ENCODE measurements at regions of chr2 and their contacts with region 1.

Region 1: GRCh38 chr2:62410015-62410453 is 96.0 kb downstream of the TMEM17 start:
- DNase-seq: no peak
- H3K4me3 Mint-ChIP-seq: no peak overlapping the region
- H3K27ac Mint-ChIP-seq: no peak overlapping the region
- H3K4me1 Mint-ChIP-seq: peaks cover 4% of the 10 kb centered on the region
- H3K27me3 Mint-ChIP-seq: peaks cover 2% of the 10 kb centered on the region

Region 2: DNA sequence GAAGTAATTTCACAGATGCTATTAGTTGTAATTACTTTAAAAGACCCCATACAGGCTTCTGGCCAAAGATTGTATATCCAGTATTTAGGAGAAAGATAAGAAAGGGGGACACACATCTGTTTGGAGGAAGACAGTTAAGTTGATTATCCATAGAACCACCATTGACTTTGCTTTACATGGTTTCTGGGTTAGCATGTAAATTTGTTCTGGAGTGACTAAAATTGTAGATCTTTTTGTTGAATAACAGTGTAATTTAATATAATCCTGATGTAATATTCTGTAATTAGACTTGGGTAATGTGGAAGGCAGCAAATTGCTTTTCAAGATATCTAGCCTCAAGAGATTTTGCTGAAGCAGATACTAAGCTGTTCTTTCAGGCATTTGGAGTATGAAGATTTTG is 487.3 kb before region 1 on chr2:
- intact Hi-C with region 1: loop called (anchors 1 kb)
- DNase-seq: no peak
- H3K4me3 Mint-ChIP-seq: no peak overlapping the region
- H3K27ac Mint-ChIP-seq: no peak overlapping the region
- H3K4me1 Mint-ChIP-seq: no peaks in the 10 kb centered on the region
- H3K27me3 Mint-ChIP-seq: no peaks in the 10 kb centered on the region

Region 3: DNA sequence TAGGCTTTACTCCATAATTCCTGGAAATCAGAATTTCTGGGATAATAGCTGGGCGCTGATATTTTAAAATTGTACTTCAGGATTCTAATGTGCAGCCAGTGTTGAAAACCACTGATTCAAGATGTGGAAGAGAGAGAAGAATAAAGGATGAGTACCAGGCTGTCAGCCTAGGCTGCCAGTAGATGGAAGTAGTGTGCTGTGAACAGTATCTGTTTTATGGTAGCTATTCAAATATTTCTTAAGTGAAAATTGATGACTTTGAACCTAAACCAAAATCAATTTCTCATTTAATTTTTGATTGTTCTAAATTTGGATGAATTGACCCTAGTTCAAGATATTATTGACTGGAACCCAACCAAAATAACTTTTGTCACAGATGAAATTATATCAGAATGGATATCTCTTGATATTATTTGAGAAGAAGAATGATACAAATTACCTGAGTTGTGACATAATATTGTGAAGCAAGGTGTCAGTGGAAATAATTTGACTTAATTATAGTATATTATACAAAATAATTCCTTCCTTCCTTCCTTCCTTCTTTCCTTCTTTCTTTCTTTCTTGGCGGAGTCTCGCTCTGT is 416.5 kb before region 1 on chr2:
- intact Hi-C with region 1: loop called (anchors 1 kb)
- DNase-seq: no peak
- H3K4me3 Mint-ChIP-seq: no peak overlapping the region
- H3K27ac Mint-ChIP-seq: no peak overlapping the region
- H3K4me1 Mint-ChIP-seq: no peaks in the 10 kb centered on the region
- H3K27me3 Mint-ChIP-seq: no peaks in the 10 kb centered on the region

Region 4: DNA sequence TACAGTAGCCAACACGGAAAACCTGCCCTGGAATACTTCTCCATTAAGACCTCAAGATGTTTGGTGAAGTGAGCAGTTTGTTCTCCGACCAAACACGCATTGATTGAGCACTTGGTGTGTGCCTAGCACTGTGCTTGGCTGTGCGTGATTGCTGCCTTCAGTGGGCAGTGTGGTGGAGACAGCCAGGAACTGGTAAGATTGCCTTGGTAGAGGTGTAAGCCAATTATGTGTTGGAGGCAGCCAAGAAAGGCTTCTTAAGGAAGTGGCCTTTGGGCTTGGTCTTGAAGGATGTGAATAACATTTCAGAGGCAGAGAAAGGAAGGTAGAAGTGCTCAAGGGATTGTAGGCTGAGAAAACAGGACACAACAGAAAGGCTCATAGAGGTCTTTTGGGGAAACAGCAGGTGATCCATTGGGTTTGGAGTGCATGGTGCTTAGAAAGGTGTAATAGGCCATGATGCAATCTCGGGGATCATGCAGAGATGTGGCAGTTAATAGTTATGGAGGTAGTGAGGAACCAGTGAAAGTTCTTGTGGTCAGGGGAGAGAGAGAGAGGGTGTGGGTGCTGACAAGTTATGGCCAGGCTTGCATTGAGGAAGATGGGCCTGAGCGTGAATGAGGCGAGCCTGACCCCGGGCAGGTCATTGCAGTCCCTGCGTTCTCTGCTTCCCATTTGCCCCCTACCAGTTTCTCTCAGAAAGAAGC is 207.9 kb before region 1 on chr2:
- intact Hi-C with region 1: loop called (anchors 1 kb)
- DNase-seq: no peak
- H3K4me3 Mint-ChIP-seq: peak overlapping the region; percentile 50
- H3K27ac Mint-ChIP-seq: peak overlapping the region; percentile 78
- H3K4me1 Mint-ChIP-seq: peaks cover 73% of the 10 kb centered on the region
- H3K27me3 Mint-ChIP-seq: no peaks in the 10 kb centered on the region